ENCODE measurements at regions of chr2 and their contacts with region 1.

Region 1: GRCh38 chr2:229273723-229274338 is 2.7 kb upstream of the PID1 start:
- DNase-seq: no peak
- ATAC-seq: no peak
- H3K4me3 Mint-ChIP-seq: no peak overlapping the region
- H3K27ac Mint-ChIP-seq: no peak overlapping the region
- H3K4me1 Mint-ChIP-seq: no peaks in the 10 kb centered on the region
- H3K27me3 Mint-ChIP-seq: peaks cover 21% of the 10 kb centered on the region

Region 2: DNA sequence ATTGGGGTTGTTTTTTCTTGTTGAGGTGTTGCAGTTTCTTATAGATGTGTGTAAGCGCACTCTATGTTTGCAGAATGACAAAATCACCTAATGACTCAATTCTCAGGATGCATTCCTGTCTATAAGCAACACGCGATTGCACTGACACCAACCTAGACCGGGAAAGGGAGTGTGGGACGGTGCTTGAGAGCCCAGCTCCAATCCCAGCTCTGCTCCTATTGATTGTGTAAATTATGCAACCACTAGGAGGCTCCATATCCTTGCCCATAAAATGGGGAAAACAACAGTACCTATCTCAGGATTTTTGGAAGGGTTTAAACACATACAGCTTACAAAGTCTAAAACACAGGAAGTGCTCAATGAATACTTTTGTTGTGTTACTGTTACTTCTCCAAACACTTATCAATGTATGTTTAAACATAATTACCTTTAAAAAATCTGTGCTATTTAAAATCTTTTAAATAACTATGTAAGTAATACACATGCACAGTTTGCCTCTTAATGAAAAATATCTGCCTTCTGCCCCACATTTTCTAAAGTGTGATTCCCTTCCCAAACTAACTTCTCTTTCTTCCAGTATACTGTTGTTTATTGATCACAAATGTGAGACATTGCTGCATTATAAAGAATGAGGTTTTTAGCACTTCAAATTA is 1224.9 kb before region 1 on chr2:
- CTCF ChIA-PET with region 1: no interaction called
- POLR2A ChIA-PET with region 1: no interaction called
- intact Hi-C with region 1: loop called in 1 of 2 experiments (anchors 5 kb)
- DNase-seq: no peak
- ATAC-seq: no peak
- H3K4me3 Mint-ChIP-seq: no peak overlapping the region
- H3K27ac Mint-ChIP-seq: no peak overlapping the region
- H3K4me1 Mint-ChIP-seq: no peaks in the 10 kb centered on the region
- H3K27me3 Mint-ChIP-seq: no peaks in the 10 kb centered on the region

Region 3: DNA sequence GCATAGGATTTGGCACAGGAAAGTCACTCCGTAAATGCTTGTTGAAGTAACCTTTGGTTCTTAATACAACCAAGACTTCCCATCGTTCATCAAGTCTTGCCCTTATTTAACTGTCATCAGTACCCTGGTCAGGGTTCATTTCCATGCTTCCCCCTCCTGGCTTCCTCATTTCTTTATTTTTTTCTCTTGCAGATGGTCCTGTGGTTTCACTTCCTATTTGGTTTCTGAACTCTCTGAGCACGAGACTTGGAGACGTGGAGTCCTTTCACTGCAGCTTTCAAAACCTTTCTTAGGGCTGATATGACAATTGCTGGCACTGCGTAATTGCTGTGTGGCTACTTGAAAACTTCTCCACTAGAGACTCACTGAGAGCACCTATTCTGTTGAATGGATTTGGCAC is 57.1 kb after region 1 on chr2:
- CTCF ChIA-PET with region 1: no interaction called
- POLR2A ChIA-PET with region 1: no interaction called
- intact Hi-C with region 1: no loop called
- DNase-seq: no peak
- ATAC-seq: no peak
- H3K4me3 Mint-ChIP-seq: no peak overlapping the region
- H3K27ac Mint-ChIP-seq: no peak overlapping the region
- H3K4me1 Mint-ChIP-seq: no peaks in the 10 kb centered on the region
- H3K27me3 Mint-ChIP-seq: no peaks in the 10 kb centered on the region